ENCODE measurements at regions of chr15 and their contacts with region 1.

Region 1: GRCh38 chr15:42929306-42929848 is 8.8 kb upstream of the TTBK2 start:
- DNase-seq: no peak
- ATAC-seq: peak in 2 of 4 donors; percentile 51 to 52
- H3K4me3 ChIP-seq: no peak overlapping the region
- H3K27ac ChIP-seq: peak overlapping the region in 1 of 12 donors; percentile 23
- H3K4me1 ChIP-seq: peaks cover 0 to 5% (median 0%) of the 10 kb centered on the region in 12 donors
- H3K27me3 ChIP-seq: no peaks in the 10 kb centered on the region
- CTCF ChIP-seq: no peak
- POLR2A ChIP-seq: no peak

Region 2: GRCh38 chr15:42704492-42704926 is 224.9 kb before region 1 on chr15:
- intact Hi-C with region 1: loop called (anchors 1 to 5 kb)
- DNase-seq: peak in 3 of 5 donors; percentile 41 to 52 (median 51)
- ATAC-seq: peak; percentile 88 to 96 (median 94)
- H3K4me3 ChIP-seq: no peak overlapping the region
- H3K27ac ChIP-seq: no peak overlapping the region
- H3K4me1 ChIP-seq: peaks cover 0 to 7% (median 0%) of the 10 kb centered on the region in 12 donors
- H3K27me3 ChIP-seq: no peaks in the 10 kb centered on the region
- CTCF ChIP-seq: peak; percentile 67 to 85 (median 74)
- POLR2A ChIP-seq: no peak

Region 3: GRCh38 chr15:42800731-42801474 is 128.5 kb before region 1 on chr15:
- intact Hi-C with region 1: loop called in 4 of 10 experiments (anchors 5 to 10 kb)
- DNase-seq: no peak
- ATAC-seq: no peak
- H3K4me3 ChIP-seq: no peak overlapping the region
- H3K27ac ChIP-seq: no peak overlapping the region
- H3K4me1 ChIP-seq: peaks cover 0 to 5% (median 0%) of the 10 kb centered on the region in 12 donors
- H3K27me3 ChIP-seq: no peaks in the 10 kb centered on the region
- CTCF ChIP-seq: peak in 3 of 12 donors; percentile 13 to 25 (median 20)
- POLR2A ChIP-seq: no peak

Region 4: DNA sequence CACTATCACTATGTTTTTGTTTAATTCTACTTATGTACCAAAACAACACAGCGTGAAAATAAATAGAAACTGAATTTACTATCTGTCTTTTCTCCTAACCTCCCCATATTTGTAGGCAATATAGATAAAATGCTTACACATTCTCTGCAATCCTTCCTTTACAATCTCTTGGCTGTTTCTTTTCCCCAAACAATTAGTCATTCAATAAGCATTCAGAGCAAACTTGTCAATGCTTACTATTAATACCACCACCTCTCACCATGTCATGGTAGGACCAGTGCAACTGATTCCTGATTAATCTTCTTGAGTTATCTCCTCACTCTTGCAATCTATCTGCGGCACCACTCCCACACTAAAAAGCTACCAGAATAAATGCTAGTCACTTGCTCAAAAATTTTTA is 65.2 kb after region 1 on chr15:
- intact Hi-C with region 1: no loop called
- DNase-seq: no peak
- ATAC-seq: peak in 2 of 4 donors; percentile 54 to 62
- H3K4me3 ChIP-seq: no peak overlapping the region
- H3K27ac ChIP-seq: no peak overlapping the region
- H3K4me1 ChIP-seq: peaks cover 0 to 7% (median 0%) of the 10 kb centered on the region in 12 donors
- H3K27me3 ChIP-seq: no peaks in the 10 kb centered on the region
- CTCF ChIP-seq: no peak
- POLR2A ChIP-seq: no peak